CD14-positive monocyte (primary cell): ENCODE measurements at regions of chr17 and their contacts with region 1.

Region 1: DNA sequence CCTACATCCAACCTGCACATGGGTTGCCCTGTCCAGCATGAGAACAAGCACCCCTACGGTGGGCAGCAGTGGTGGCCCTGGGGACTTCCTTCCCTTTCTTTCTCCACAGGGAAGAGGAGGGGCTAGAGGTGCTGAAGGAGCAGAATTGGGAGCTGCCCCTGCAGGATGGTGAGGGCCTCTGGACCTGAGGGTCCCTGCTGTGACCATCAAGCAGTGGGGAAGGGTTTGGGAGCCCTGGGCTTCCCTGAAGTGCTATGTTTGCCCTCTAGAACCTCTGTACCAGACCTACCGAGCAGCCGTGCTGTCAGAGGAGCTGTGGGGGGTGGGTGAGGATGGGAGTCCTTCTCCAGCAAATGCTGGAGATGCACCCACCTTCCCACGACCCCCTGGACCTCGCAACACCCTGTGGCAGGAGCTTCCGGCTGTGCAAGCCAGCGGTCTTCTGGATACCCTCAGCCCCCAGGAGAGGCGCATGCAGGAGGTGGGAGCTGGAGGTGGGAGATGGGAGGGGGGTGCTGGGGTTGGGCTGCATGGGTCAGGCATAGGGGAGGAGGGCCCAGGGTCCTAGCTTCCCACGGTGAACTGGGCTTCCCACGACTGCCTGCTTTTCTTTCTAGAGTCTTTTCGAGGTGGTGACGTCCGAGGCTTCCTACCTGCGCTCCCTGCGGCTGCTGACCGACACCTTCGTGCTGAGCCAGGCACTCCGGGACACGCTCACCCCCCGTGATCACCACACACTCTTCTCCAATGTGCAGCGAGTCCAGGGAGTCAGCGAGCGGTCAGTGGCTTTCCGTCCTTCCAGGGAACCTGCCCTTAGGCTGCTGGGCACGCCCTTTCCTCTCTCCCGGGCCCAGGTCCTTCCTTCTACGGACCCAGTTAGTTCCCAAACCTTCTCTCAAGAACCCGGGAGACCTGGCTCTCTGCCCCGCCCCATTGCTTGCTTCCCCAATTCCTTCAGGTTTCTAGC is 5.0 kb downstream of the ARHGEF15 start:
- DNase-seq: no peak
- H3K4me3 ChIP-seq: no peak overlapping the region
- H3K4me3 Mint-ChIP-seq: no peak overlapping the region
- H3K27ac ChIP-seq: no peak overlapping the region
- H3K27ac Mint-ChIP-seq: peak overlapping the region in 1 of 7 donors; percentile 50
- H3K4me1 ChIP-seq: no peaks in the 10 kb centered on the region
- H3K4me1 Mint-ChIP-seq: peaks cover 2% of the 10 kb centered on the region
- H3K27me3 ChIP-seq: peaks cover 0 to 7% of the 10 kb centered on the region in 2 donors
- H3K27me3 Mint-ChIP-seq: peaks cover 13 to 35% (median 15%) of the 10 kb centered on the region in 3 donors
- CTCF ChIP-seq: no peak

Region 2: GRCh38 chr17:8057691-8058114 is 257.4 kb before region 1 on chr17:
- intact Hi-C with region 1: no loop called
- DNase-seq: peak; percentile 60 to 88 (median 76)
- H3K4me3 ChIP-seq: no peak overlapping the region
- H3K4me3 Mint-ChIP-seq: no peak overlapping the region
- H3K27ac ChIP-seq: no peak overlapping the region
- H3K27ac Mint-ChIP-seq: peak overlapping the region in 2 of 7 donors; percentile 49 to 95
- H3K4me1 ChIP-seq: peaks cover 39 to 42% of the 10 kb centered on the region in 2 donors
- H3K4me1 Mint-ChIP-seq: peaks cover 37% of the 10 kb centered on the region
- H3K27me3 ChIP-seq: peaks cover 4 to 6% of the 10 kb centered on the region in 2 donors
- H3K27me3 Mint-ChIP-seq: peaks cover 12 to 21% (median 14%) of the 10 kb centered on the region in 3 donors
- CTCF ChIP-seq: peak; percentile 81

Region 3: DNA sequence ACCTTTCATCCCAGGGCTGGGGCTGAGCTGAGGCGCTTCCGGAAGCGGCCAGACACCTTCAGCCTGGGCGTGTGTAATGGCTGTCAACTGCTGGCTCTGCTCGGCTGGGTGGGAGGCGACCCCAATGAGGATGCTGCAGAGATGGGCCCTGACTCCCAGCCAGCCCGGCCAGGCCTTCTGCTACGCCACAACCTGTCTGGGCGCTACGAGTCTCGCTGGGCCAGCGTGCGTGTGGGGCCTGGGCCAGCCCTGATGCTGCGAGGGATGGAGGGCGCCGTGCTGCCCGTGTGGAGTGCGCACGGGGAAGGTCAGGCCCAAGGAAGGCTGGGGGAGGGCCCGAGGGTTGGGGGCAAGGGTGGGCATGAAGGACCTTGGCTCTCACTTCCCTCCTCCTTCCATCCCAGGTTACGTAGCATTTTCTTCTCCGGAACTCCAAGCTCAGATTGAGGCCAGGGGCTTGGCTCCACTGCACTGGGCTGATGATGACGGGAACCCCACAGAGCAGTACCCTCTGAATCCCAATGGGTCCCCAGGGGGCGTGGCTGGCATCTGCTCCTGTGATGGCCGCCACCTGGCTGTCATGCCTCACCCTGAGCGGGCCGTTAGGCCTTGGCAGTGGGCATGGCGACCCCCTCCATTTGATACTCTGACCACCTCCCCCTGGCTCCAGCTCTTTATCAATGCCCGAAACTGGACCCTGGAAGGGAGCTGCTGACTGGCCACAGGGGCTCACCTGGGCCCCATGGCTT is 46.4 kb before region 1 on chr17:
- intact Hi-C with region 1: loop called in 1 of 2 experiments (anchors 10 kb)
- DNase-seq: no peak
- H3K4me3 ChIP-seq: no peak overlapping the region
- H3K4me3 Mint-ChIP-seq: no peak overlapping the region
- H3K27ac ChIP-seq: no peak overlapping the region
- H3K27ac Mint-ChIP-seq: peak overlapping the region in 1 of 7 donors; percentile 54
- H3K4me1 ChIP-seq: no peaks in the 10 kb centered on the region
- H3K4me1 Mint-ChIP-seq: no peaks in the 10 kb centered on the region
- H3K27me3 ChIP-seq: no peaks in the 10 kb centered on the region
- H3K27me3 Mint-ChIP-seq: peaks cover 0 to 2% (median 2%) of the 10 kb centered on the region in 3 donors
- CTCF ChIP-seq: no peak

Region 4: DNA sequence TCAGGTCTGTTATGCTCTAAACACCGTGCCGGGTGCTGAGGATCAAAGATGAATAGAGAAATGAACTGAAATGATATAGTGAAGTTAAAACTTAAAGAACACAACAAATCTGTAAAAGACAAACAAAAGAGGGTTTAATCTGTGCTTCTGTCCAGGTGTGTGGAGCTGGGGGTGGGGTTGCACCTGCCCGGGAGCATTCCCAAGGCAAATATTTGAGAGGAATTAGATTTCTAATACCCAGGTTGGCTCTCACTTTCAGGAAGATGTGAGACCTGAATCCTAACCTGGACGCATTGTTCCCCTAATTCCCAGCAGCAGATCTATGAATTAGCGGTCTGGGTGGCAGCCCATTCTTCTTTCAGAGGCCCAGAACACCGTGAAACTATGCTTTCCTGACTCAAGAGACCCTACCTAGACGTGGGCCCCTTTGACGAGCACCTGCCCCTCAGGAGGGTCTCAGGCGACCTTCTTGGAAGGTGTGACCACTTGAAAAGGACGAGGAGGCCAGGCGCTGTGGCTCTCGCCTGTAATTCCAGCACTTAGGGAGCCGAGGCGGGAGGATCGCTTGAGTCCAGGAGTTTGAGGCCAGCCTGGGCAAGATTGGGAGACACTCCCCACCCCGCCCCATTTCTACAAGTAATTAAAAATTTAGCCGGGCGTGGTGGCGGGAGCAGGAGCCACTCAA is 27.3 kb before region 1 on chr17:
- intact Hi-C with region 1: no loop called
- DNase-seq: no peak
- H3K4me3 ChIP-seq: peak overlapping the region; percentile 76 to 90 (median 84)
- H3K4me3 Mint-ChIP-seq: peak overlapping the region; percentile 93 to 96
- H3K27ac ChIP-seq: peak overlapping the region; percentile 77 to 84
- H3K27ac Mint-ChIP-seq: peak overlapping the region; percentile 89 to 97 (median 95)
- H3K4me1 ChIP-seq: peaks cover 27 to 40% of the 10 kb centered on the region in 2 donors
- H3K4me1 Mint-ChIP-seq: peaks cover 42% of the 10 kb centered on the region
- H3K27me3 ChIP-seq: no peaks in the 10 kb centered on the region
- H3K27me3 Mint-ChIP-seq: peaks cover 0 to 1% (median 0%) of the 10 kb centered on the region in 3 donors
- CTCF ChIP-seq: no peak

Region 5: DNA sequence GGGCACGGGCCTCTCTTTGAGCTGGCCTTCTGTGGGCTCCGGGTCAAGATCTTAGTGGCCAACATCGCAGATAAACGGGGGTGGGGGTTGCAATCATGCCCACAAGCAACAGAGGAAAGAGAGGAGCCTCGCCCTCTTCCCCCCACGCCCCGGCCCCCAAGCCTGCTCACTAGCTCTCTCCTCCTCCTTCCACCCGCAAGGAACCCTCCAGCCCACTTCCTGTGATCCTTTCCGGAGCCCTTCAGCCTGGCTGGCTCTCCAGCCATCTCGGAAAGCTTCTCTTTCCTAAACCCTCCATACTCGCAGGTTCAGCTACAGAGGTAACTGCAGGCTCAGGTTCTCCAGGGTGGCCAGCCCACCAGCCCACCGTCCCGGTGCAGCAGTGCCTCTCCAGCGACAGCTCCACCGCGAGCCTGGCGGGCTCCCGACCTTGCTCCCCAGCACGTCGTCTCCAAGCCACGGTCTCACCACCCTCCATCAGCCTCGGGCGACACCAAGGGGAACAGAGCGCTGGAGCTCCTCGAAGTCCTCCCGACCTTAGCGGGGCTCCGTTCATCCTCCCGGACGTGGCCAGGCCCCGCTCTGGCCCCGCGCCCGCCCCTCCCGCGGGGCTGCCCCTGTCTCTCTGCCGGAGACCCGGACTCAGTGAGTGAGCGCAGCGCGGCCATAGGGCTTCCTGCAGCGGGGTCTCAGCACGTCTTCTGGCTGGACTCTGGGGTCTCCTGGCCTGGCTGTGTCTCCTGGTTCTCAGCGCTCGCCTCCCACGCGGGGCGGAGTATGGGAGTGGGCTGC is 11.6 kb after region 1 on chr17:
- intact Hi-C with region 1: loop called in 1 of 2 experiments (anchors 2 kb)
- DNase-seq: peak; percentile 12 to 37 (median 28)
- H3K4me3 ChIP-seq: peak overlapping the region; percentile 16 to 75 (median 34)
- H3K4me3 Mint-ChIP-seq: peak overlapping the region; percentile 76 to 92
- H3K27ac ChIP-seq: no peak overlapping the region
- H3K27ac Mint-ChIP-seq: peak overlapping the region in 3 of 7 donors; percentile 41 to 62 (median 50)
- H3K4me1 ChIP-seq: peaks cover 16 to 19% of the 10 kb centered on the region in 2 donors
- H3K4me1 Mint-ChIP-seq: peaks cover 27% of the 10 kb centered on the region
- H3K27me3 ChIP-seq: peaks cover 3 to 34% of the 10 kb centered on the region in 2 donors
- H3K27me3 Mint-ChIP-seq: peaks cover 38 to 48% (median 42%) of the 10 kb centered on the region in 3 donors
- CTCF ChIP-seq: peak; percentile 12